Esophagus squamous epithelium (tissue), 5 donors: ENCODE measurements at regions of chr9 and their contacts with region 1.

Region 1: GRCh38 chr9:2837915-2838314 is 6.0 kb downstream of the PUM3 start:
- DNase-seq: no peak
- H3K4me3 ChIP-seq: peak overlapping the region in 2 of 4 donors; percentile 6 to 25
- H3K27ac ChIP-seq: peak overlapping the region; percentile 6 to 48 (median 22)
- H3K4me1 ChIP-seq: peaks cover 19 to 58% (median 42%) of the 10 kb centered on the region in 3 donors
- H3K27me3 ChIP-seq: no peaks in the 10 kb centered on the region
- CTCF ChIP-seq: peak in 3 of 6 experiments; percentile 11 to 42 (median 19)
- POLR2A ChIP-seq: no peak

Region 2: DNA sequence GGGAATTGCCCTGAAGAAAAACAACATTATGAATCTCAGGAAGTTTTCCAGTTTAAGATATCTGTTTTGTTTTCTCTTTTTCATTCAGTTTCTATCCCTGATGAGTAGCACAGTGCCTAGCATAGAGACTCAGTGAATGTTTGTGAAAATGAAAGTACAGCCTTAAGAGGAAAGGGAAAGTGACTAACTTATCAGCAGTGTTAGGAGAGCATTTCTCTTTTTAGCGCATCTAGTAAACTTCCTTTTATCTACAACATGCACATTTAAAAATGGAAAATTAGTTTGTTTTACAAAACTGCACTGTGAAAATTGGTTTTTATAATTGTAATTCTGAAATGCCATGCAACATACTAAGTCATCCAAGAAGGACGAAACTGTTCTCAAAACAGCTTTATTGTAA is 712.0 kb before region 1 on chr9:
- intact Hi-C with region 1: loop called (anchors 10 kb)
- DNase-seq: no peak
- H3K4me3 ChIP-seq: peak overlapping the region in 3 of 4 donors; percentile 12 to 48 (median 15)
- H3K27ac ChIP-seq: peak overlapping the region; percentile 62 to 81 (median 79)
- H3K4me1 ChIP-seq: peaks cover 0 to 71% (median 21%) of the 10 kb centered on the region in 3 donors
- H3K27me3 ChIP-seq: no peaks in the 10 kb centered on the region
- CTCF ChIP-seq: no peak
- POLR2A ChIP-seq: no peak

Region 3: DNA sequence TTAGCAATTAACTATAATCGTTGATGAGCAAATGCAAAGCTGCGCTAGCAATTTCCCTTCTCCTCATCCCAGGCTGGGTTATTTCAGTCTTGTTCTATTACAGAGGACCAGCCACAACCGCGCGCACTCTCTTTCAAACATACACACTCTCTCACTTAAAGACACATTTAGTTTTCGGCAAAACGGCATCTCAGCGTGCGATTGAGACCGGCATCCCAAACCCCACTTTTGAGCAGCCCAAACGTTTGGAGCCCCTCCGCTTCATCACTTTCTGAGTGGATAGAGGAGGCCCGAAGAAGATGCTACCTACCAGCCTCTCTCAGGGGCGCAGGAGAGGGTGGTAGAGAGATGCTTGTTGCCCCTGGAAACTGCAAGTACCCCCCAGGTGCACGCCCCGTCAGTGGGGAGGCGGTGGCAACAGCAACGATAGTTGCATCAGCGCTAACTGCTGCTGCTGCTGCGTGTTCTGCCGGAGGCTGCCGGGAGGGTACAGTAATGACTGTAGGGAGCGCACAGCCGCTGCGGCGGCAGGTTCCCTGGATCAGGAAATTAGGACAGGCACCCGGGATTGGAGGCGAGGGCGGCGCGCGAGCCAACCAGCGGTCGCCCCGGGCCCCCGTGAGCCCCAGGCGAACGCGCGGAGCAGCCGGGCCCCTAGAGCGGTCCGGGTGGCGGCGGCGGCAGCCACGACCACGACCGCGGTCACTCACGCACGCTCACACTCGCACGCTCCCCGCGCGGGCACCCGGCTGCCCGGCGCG is 216.8 kb before region 1 on chr9:
- intact Hi-C with region 1: loop called (anchors 5 kb)
- DNase-seq: no peak
- H3K4me3 ChIP-seq: peak overlapping the region; percentile 65 to 88 (median 82)
- H3K27ac ChIP-seq: peak overlapping the region; percentile 82 to 91 (median 86)
- H3K4me1 ChIP-seq: peaks cover 11 to 43% (median 17%) of the 10 kb centered on the region in 3 donors
- H3K27me3 ChIP-seq: peaks cover 0 to 35% (median 0%) of the 10 kb centered on the region in 4 donors
- CTCF ChIP-seq: peak in 3 of 6 experiments; percentile 12 to 36 (median 16)
- POLR2A ChIP-seq: no peak

Region 4: GRCh38 chr9:2740616-2741015 is 97.3 kb before region 1 on chr9:
- intact Hi-C with region 1: no loop called
- DNase-seq: no peak
- H3K4me3 ChIP-seq: no peak overlapping the region
- H3K27ac ChIP-seq: no peak overlapping the region
- H3K4me1 ChIP-seq: no peaks in the 10 kb centered on the region
- H3K27me3 ChIP-seq: no peaks in the 10 kb centered on the region
- CTCF ChIP-seq: no peak
- POLR2A ChIP-seq: no peak

Region 5: GRCh38 chr9:2755285-2755684 is 82.6 kb before region 1 on chr9:
- intact Hi-C with region 1: loop called (anchors 10 kb)
- DNase-seq: no peak
- H3K4me3 ChIP-seq: no peak overlapping the region
- H3K27ac ChIP-seq: no peak overlapping the region
- H3K4me1 ChIP-seq: no peaks in the 10 kb centered on the region
- H3K27me3 ChIP-seq: no peaks in the 10 kb centered on the region
- CTCF ChIP-seq: no peak
- POLR2A ChIP-seq: no peak

Region 6: DNA sequence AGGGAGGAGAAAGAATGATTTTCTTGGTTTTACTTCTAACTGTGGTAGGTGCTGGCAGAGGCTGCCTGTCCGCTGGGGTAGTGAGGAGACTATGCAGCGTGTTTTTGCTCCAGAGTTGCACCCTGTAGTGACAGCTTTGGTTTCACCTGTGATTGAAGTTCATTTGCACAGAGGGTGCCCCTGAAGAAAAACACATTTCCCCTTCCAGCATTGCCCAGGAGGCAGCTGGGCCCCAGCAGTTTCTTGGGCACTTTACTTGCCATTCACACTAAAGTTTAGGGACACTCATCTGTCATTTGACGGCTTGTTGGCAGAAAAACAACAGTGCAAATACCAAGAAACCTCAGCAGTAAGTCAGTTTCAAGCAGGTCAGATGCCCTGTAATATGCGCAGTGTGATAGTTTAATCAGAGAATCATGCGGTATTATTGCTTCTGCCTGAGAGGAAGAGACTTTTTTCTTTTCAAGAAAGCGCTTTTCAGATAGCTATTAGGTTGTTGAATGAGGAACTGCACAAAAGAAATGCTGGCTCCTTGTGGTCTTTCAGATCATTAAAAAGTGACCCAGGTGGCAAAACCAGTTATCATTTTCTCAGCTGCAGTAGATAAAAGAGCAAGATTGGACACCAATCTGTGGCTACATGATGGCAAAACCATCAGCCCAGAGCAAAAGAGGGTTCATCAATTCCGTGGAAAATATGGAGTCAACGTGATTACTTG is 142.1 kb after region 1 on chr9:
- intact Hi-C with region 1: no loop called
- DNase-seq: no peak
- H3K4me3 ChIP-seq: no peak overlapping the region
- H3K27ac ChIP-seq: no peak overlapping the region
- H3K4me1 ChIP-seq: no peaks in the 10 kb centered on the region
- H3K27me3 ChIP-seq: no peaks in the 10 kb centered on the region
- CTCF ChIP-seq: no peak
- POLR2A ChIP-seq: no peak